MCF 10A (cell line): ENCODE measurements at regions of chr22 and their contacts with region 1.

Region 1: DNA sequence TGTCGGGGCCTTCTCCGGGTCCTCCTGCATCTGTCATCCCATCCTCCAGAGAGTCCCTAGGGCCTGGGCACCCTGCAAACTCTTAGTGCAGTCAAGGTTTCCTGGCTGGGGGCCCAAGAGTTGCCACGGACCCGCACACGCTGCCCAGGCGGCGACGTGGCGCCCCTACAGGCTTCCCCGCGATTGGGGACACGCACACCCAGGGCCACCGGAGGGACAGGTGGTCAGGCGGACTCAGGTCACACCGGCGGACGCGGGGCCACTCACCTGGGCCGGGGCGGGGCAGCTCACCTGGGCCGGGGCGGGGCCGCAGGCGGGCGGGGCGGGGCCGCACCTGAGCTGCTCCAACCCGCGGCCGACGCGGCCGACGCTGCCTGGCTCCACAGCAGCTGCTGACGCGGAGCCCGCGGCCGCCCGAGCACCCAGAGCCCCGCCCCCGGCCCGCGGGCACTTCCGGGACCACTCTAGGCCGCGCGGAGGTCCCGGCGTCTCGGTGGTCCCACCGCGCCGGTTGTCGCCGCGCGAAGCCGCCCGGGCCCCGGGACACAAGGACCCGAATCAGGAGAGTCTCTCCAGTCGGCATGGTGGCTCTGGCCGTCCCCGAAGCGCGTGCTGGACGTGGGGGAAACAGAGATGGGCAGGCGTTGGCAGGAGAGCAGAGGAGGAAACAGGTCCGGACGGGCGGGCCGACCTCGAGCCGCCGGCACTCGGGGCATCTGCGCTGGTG is at the start of gene ZNF70:
- DNase-seq: peak; percentile 84
- H3K4me3 Mint-ChIP-seq: peak within 1 kb of the TSS; percentile 83
- H3K27ac Mint-ChIP-seq: peak within 1 kb of the TSS; percentile 73
- H3K4me1 Mint-ChIP-seq: peaks cover 13% of the 10 kb centered on the region
- H3K27me3 Mint-ChIP-seq: no peaks in the 10 kb centered on the region
- CTCF ChIP-seq: no peak
- total RNA-seq, gene ZNF70: 3.3 and 4.5 TPM in 2 replicates

Region 2: DNA sequence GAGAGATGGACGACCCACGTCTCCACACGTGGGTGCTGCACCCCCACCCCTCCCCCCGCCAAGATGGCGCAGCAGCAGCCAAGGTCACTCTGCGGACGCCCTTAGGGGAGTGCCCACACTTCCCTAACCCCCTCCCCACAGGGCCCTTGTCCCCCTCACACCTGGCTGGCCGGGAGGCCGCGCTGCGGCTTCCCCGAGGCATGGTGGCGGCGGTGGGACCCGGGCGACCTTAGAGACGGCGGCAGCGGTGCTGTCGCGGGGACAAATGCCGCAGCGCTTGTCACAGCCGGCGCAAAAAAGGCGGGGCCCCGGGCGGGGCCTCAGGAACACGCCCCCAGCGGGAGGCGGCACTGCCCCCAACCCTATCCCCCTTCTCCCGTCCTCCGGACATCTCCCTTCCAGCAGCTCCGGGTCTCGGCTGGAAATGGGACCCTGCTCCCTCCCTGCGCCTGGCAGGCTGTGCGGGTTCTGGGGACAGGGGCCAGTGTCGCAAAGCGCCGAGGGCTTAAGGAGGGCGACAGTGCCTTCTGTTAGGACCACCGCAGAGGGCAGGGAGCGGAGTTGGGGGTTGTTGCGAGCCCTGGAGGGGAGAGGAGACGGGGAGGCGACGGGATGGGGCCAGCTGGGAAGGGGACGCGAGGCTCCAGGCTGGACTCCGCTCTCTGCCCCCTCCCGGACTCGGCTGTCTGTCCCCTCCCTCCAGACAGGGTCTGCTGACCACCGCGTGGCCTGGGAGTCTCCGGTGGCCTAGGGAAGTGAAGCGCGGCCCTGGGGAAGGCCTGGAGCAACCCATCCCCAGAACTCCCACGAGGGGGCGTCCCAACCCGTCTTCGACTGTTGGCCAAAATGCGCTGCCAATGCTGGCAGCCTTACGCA is 17.0 kb after region 1 on chr22 and contains the start of gene CHCHD10:
- CTCF ChIA-PET with region 1: interaction called, 6 read pairs
- POLR2A ChIA-PET with region 1: interaction called, 12 read pairs
- intact Hi-C with region 1: no loop called
- DNase-seq: peak; percentile 69
- H3K4me3 Mint-ChIP-seq: peak within 1 kb of the TSS; percentile 69
- H3K27ac Mint-ChIP-seq: no peak within 1 kb of the TSS
- H3K4me1 Mint-ChIP-seq: peaks cover 9% of the 10 kb centered on the region
- H3K27me3 Mint-ChIP-seq: no peaks in the 10 kb centered on the region
- CTCF ChIP-seq: peak; percentile 68
- total RNA-seq, gene CHCHD10: 86.0 and 90.1 TPM in 2 replicates